MCF 10A (cell line): ENCODE measurements at regions of chr1 and their contacts with region 1.

Region 1: DNA sequence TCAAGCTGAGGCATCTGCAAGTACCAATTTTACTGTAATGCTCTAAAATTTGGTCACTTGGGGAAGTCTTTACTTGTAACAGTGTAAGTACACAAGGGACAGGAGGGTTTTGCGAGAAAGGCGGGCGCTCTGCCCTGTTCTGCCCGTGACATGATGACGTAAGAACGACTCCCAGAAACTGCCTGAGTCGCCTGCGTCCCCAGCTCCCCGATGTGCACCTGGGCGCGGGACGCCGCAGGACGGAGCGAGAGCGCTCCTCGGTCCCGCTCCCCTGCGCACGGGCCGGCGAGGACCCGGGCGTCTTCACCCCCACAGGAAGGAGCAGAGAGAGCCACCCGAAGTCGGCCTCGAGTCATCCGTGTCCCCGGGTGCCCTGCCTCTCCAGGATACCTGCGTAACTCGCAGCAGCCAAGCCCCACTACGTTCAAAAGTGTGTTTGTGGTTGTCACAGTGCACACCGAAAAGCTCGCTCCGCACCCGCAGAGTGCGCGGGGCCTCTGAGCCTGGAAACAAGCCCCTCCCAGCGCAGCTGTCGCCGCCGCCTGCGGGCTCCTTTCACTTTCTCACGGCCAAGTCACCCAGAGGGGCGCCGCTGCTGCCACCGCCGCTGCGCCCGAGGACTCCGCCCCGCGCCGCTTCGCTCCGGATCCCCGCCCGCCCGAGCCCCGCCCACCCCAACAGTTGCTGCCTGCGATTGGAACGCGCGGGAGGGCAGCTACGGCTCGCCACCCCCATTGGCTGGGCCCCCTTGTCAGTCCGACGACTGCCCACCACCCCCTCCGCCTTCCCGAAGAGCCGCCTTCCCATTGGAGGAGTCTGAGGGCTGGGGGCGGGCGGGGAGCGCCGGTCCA is 3.2 kb upstream of the ZBTB18 start:
- DNase-seq: peak; percentile 100
- H3K4me3 Mint-ChIP-seq: peak overlapping the region; percentile 94
- H3K27ac Mint-ChIP-seq: peak overlapping the region; percentile 87
- H3K4me1 Mint-ChIP-seq: peaks cover 32% of the 10 kb centered on the region
- H3K27me3 Mint-ChIP-seq: peaks cover 13% of the 10 kb centered on the region
- CTCF ChIP-seq: no peak

Region 2: GRCh38 chr1:243708210-243708609 is 339.6 kb before region 1 on chr1:
- CTCF ChIA-PET with region 1: no interaction called
- POLR2A ChIA-PET with region 1: interaction called, 9 read pairs
- intact Hi-C with region 1: loop called (anchors 5 kb)
- DNase-seq: peak; percentile 32
- H3K4me3 Mint-ChIP-seq: no peak overlapping the region
- H3K27ac Mint-ChIP-seq: no peak overlapping the region
- H3K4me1 Mint-ChIP-seq: no peaks in the 10 kb centered on the region
- H3K27me3 Mint-ChIP-seq: no peaks in the 10 kb centered on the region
- CTCF ChIP-seq: peak; percentile 79

Region 3: GRCh38 chr1:244012202-244012601 is 35.6 kb before region 1 on chr1:
- CTCF ChIA-PET with region 1: interaction called, 3 read pairs
- POLR2A ChIA-PET with region 1: interaction called, 8 read pairs
- intact Hi-C with region 1: loop called (anchors 5 kb)
- DNase-seq: peak; percentile 89
- H3K4me3 Mint-ChIP-seq: peak overlapping the region; percentile 10
- H3K27ac Mint-ChIP-seq: no peak overlapping the region
- H3K4me1 Mint-ChIP-seq: peaks cover 19% of the 10 kb centered on the region
- H3K27me3 Mint-ChIP-seq: no peaks in the 10 kb centered on the region
- CTCF ChIP-seq: no peak

Region 4: GRCh38 chr1:244060686-244061085 is 12.8 kb after region 1 on chr1:
- CTCF ChIA-PET with region 1: interaction called, 5 read pairs
- POLR2A ChIA-PET with region 1: interaction called, 27 read pairs
- intact Hi-C with region 1: no loop called
- DNase-seq: no peak
- H3K4me3 Mint-ChIP-seq: no peak overlapping the region
- H3K27ac Mint-ChIP-seq: no peak overlapping the region
- H3K4me1 Mint-ChIP-seq: peaks cover 5% of the 10 kb centered on the region
- H3K27me3 Mint-ChIP-seq: no peaks in the 10 kb centered on the region
- CTCF ChIP-seq: no peak

Region 5: GRCh38 chr1:244239261-244239770 is 191.5 kb after region 1 on chr1:
- CTCF ChIA-PET with region 1: interaction called, 3 read pairs
- POLR2A ChIA-PET with region 1: interaction called, 25 read pairs
- intact Hi-C with region 1: no loop called
- DNase-seq: peak; percentile 95
- H3K4me3 Mint-ChIP-seq: no peak overlapping the region
- H3K27ac Mint-ChIP-seq: peak overlapping the region; percentile 91
- H3K4me1 Mint-ChIP-seq: peaks cover 7% of the 10 kb centered on the region
- H3K27me3 Mint-ChIP-seq: no peaks in the 10 kb centered on the region
- CTCF ChIP-seq: no peak

Region 6: GRCh38 chr1:244291236-244292201 is 243.7 kb after region 1 on chr1:
- CTCF ChIA-PET with region 1: no interaction called
- POLR2A ChIA-PET with region 1: no interaction called
- intact Hi-C with region 1: no loop called
- DNase-seq: no peak
- H3K4me3 Mint-ChIP-seq: no peak overlapping the region
- H3K27ac Mint-ChIP-seq: no peak overlapping the region
- H3K4me1 Mint-ChIP-seq: peaks cover 14% of the 10 kb centered on the region
- H3K27me3 Mint-ChIP-seq: no peaks in the 10 kb centered on the region
- CTCF ChIP-seq: no peak